BJ (cell line): ENCODE measurements at regions of chr6 and their contacts with region 1.

Region 1: GRCh38 chr6:42075159-42075838 is 25.0 kb downstream of the TAF8 start:
- DNase-seq: peak; percentile 21
- H3K4me3 ChIP-seq: no peak overlapping the region
- H3K27me3 ChIP-seq: no peaks in the 10 kb centered on the region
- CTCF ChIP-seq: peak; percentile 94

Region 2: GRCh38 chr6:42086046-42087035 is 11.0 kb after region 1 on chr6:
- CTCF ChIA-PET with region 1: interaction called, 13 read pairs
- POLR2A ChIA-PET with region 1: no interaction called
- DNase-seq: no peak
- H3K4me3 ChIP-seq: no peak overlapping the region
- H3K27me3 ChIP-seq: no peaks in the 10 kb centered on the region
- CTCF ChIP-seq: peak; percentile 36